ENCODE measurements at regions of chr1 and their contacts with region 1.

Region 1: GRCh38 chr1:205711104-205712020 is 31.1 kb upstream of the SLC45A3 start:
- DNase-seq: peak; percentile 87
- ATAC-seq: peak; percentile 96
- H3K4me3 ChIP-seq: no peak overlapping the region
- H3K4me3 Mint-ChIP-seq: no peak overlapping the region
- H3K27ac ChIP-seq: no peak overlapping the region
- H3K27ac Mint-ChIP-seq: peak overlapping the region; percentile 39
- H3K4me1 ChIP-seq: peaks cover 13 to 16% of the 10 kb centered on the region in 2 donors
- H3K4me1 Mint-ChIP-seq: peaks cover 22% of the 10 kb centered on the region
- H3K27me3 ChIP-seq: no peaks in the 10 kb centered on the region
- H3K27me3 Mint-ChIP-seq: no peaks in the 10 kb centered on the region
- CTCF ChIP-seq: peak; percentile 95

Region 2: GRCh38 chr1:205591522-205592351 is 119.6 kb before region 1 on chr1:
- CTCF ChIA-PET with region 1: interaction called, 154 read pairs
- POLR2A ChIA-PET with region 1: no interaction called
- intact Hi-C with region 1: loop called (anchors 1 kb)
- DNase-seq: peak; percentile 90
- ATAC-seq: peak; percentile 89
- H3K4me3 ChIP-seq: peak overlapping the region in 4 of 5 experiments; percentile 51 to 69 (median 60)
- H3K4me3 Mint-ChIP-seq: peak overlapping the region; percentile 87
- H3K27ac ChIP-seq: peak overlapping the region; percentile 59 to 72
- H3K27ac Mint-ChIP-seq: peak overlapping the region; percentile 85
- H3K4me1 ChIP-seq: peaks cover 46 to 54% of the 10 kb centered on the region in 2 donors
- H3K4me1 Mint-ChIP-seq: peaks cover 48% of the 10 kb centered on the region
- H3K27me3 ChIP-seq: no peaks in the 10 kb centered on the region
- H3K27me3 Mint-ChIP-seq: no peaks in the 10 kb centered on the region
- CTCF ChIP-seq: peak; percentile 98

Region 3: DNA sequence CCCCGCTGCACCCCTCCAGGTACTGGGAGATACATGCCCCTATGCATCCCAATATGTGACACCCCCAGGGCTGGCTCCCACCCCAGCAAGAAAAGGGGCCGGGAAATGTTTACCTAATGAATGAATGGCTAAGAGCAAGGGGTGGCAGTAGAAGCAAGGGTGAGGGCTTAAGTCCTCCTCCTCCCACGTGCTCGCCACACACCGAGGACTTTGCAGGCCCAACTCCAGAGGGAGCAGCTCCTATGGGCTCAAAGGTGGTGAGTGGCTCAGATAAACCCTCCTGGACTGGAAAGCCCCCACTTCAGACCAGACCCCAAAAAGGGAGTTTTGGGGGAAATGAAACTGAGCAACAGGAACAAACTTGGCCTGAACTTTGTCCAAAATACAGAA is 42.4 kb before region 1 on chr1:
- CTCF ChIA-PET with region 1: interaction called, 943 read pairs
- POLR2A ChIA-PET with region 1: interaction called, 3 read pairs
- intact Hi-C with region 1: loop called (anchors 2 kb)
- DNase-seq: peak; percentile 88
- ATAC-seq: peak; percentile 68
- H3K4me3 ChIP-seq: peak overlapping the region in 2 of 5 experiments; percentile 29 to 47
- H3K4me3 Mint-ChIP-seq: peak overlapping the region; percentile 74
- H3K27ac ChIP-seq: peak overlapping the region; percentile 89 to 93
- H3K27ac Mint-ChIP-seq: peak overlapping the region; percentile 88
- H3K4me1 ChIP-seq: peaks cover 86 to 92% of the 10 kb centered on the region in 2 donors
- H3K4me1 Mint-ChIP-seq: peaks cover 78% of the 10 kb centered on the region
- H3K27me3 ChIP-seq: no peaks in the 10 kb centered on the region
- H3K27me3 Mint-ChIP-seq: no peaks in the 10 kb centered on the region
- CTCF ChIP-seq: peak; percentile 26

Region 4: GRCh38 chr1:205693421-205693991 is 17.9 kb before region 1 on chr1:
- CTCF ChIA-PET with region 1: interaction called, 68 read pairs
- POLR2A ChIA-PET with region 1: no interaction called
- intact Hi-C with region 1: no loop called
- DNase-seq: no peak
- ATAC-seq: no peak
- H3K4me3 ChIP-seq: no peak overlapping the region
- H3K4me3 Mint-ChIP-seq: no peak overlapping the region
- H3K27ac ChIP-seq: no peak overlapping the region
- H3K27ac Mint-ChIP-seq: no peak overlapping the region
- H3K4me1 ChIP-seq: peaks cover 12 to 13% of the 10 kb centered on the region in 2 donors
- H3K4me1 Mint-ChIP-seq: peaks cover 10% of the 10 kb centered on the region
- H3K27me3 ChIP-seq: no peaks in the 10 kb centered on the region
- H3K27me3 Mint-ChIP-seq: peaks cover 4% of the 10 kb centered on the region
- CTCF ChIP-seq: no peak

Region 5: GRCh38 chr1:205729945-205730610 is 18.7 kb after region 1 on chr1:
- CTCF ChIA-PET with region 1: interaction called, 23 read pairs
- POLR2A ChIA-PET with region 1: no interaction called
- intact Hi-C with region 1: no loop called
- DNase-seq: no peak
- ATAC-seq: no peak
- H3K4me3 ChIP-seq: no peak overlapping the region
- H3K4me3 Mint-ChIP-seq: no peak overlapping the region
- H3K27ac ChIP-seq: no peak overlapping the region
- H3K27ac Mint-ChIP-seq: no peak overlapping the region
- H3K4me1 ChIP-seq: no peaks in the 10 kb centered on the region
- H3K4me1 Mint-ChIP-seq: peaks cover 9% of the 10 kb centered on the region
- H3K27me3 ChIP-seq: no peaks in the 10 kb centered on the region
- H3K27me3 Mint-ChIP-seq: no peaks in the 10 kb centered on the region
- CTCF ChIP-seq: no peak